ENCODE measurements at regions of chr16 and their contacts with region 1.

Region 1: DNA sequence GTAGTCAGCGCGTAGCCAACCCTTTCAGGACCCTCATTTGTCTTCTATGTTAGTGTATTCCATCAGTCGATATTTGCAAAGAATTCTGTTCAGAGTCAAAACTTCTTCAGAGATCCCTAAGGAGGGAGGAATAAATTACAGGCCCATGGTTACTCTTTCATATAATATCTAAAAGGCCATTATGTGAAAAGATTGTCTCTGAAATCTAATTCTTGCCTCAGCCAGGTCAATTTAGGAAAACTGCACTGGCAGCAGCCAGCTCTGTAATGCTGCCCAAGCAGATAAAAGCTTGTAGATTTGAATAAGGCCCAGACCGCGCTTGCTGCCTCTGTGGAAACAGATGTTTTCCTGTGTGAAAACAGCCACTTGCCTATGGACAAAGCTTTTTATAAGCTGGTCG is 379.8 kb downstream of the CNTNAP4 start:
- DNase-seq: no peak
- ATAC-seq: no peak

Region 2: DNA sequence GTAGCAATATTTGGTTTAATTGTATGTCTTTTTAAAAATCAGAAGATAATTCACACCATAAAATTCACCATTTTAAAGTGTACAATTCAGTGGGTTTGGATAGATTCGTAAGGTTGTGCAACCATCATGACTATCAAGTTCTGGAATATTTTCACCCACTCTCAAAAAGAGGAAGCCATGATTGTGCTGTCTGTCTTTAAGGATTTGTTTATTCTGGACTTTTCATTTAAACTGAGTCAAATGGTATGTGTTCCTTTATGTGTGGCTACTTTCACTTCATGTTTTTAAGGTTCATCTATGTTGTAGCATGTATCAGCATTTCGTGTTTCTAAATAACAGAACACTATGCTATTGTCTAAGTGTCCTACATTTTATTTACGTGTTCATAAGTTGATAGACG is 862.6 kb before region 1 on chr16:
- intact Hi-C with region 1: loop called (anchors 5 kb)
- DNase-seq: no peak
- ATAC-seq: peak; percentile 56

Region 3: GRCh38 chr16:77317059-77317458 is 660.1 kb after region 1 on chr16:
- intact Hi-C with region 1: loop called (anchors 5 kb)
- DNase-seq: no peak
- ATAC-seq: no peak

Region 4: DNA sequence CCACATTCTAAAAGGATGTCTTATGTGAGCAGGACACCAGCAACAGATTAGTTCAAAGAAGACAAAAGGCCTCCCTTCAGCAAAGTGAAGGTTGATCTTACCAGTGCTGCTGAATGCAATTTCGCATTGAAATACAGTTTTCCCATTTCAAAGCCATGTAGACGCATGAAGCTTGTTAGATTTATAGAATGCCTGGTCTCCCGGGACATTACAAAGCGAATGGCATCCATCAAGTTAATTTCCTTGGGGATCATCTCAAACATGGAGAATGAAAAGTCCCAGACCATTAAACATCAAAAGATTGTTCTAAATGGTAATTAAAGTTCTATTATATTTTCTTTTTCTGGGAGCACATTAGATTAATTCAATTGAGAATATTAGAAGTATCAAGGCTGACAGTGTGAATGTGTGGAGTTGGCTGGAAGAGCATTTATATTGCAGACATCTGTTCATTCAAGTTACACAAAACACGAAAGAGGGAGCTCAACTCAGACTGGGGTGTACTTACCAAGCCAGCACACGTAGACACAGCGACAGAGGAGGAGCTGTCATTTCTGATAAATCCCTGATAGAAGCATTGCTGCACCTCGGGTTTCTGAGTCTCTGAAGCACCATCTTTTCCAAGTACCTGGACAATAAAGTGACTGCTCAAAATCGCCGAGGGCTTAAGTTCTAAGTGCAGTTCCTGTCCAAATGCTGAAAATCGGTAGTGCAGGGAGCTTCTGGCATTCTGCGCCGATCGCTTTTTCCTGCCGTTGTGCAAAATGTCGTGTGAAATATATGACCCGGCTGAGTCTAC is 774.0 kb after region 1 on chr16:
- intact Hi-C with region 1: no loop called
- DNase-seq: no peak
- ATAC-seq: no peak